ENCODE measurements at regions of chr10 and their contacts with region 1.

Region 1: GRCh38 chr10:7857262-7857661 is 39.0 kb downstream of the TAF3 start:
- DNase-seq: peak in 1 of 2 experiments; percentile 24
- H3K4me3 ChIP-seq: no peak overlapping the region
- H3K4me3 Mint-ChIP-seq: peak overlapping the region; percentile 60
- H3K27ac Mint-ChIP-seq: peak overlapping the region; percentile 81
- H3K4me1 ChIP-seq: peaks cover 62% of the 10 kb centered on the region
- H3K4me1 Mint-ChIP-seq: peaks cover 49% of the 10 kb centered on the region
- H3K27me3 ChIP-seq: no peaks in the 10 kb centered on the region
- H3K27me3 Mint-ChIP-seq: no peaks in the 10 kb centered on the region
- CTCF ChIP-seq: no peak

Region 2: DNA sequence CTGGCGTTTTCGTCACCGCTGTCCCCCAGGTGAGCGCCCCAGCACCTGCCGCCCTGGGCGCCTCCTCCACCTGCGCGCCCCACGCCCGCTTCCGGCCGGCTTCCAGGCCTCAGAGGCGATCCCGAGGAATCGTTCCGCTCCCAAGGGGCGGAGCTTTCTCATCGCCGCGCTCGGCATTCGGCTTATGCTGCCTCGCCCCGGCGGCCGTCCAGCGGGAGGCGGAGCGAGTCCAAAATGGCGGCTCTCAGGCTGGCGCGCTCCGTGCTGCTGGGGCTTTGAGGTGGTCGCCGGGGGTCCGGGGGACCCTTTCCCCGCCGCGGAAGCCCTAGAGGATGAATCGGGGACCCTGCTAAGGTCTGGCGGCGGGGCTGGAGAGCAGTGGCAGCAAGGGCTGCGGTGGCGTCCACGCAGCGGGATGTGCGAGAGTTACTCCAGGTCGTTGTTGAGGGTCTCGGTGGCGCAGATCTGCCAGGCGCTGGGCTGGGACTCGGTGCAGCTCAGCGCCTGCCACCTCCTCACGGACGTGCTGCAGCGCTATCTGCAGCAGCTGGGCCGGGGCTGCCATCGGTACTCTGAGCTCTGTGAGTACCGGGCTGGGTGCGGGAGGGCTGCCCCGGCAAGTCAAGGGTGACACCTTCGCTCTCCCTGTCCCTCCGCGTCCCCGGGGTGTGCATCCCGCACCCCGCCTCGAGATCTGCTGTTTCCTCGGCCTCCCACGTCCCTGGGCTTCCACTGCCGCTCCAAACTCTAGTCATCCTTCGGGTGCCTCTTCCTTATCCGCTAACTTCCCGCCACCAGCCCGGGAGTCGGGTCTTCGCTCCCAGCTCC is 38.8 kb before region 1 on chr10 and contains the start of gene TAF3:
- CTCF ChIA-PET with region 1: interaction called, 6 read pairs
- POLR2A ChIA-PET with region 1: interaction called, 9 read pairs
- intact Hi-C with region 1: loop called (anchors 1 kb)
- DNase-seq: peak; percentile 94 to 99
- H3K4me3 ChIP-seq: peak within 1 kb of the TSS; percentile 95
- H3K4me3 Mint-ChIP-seq: peak within 1 kb of the TSS; percentile 84
- H3K27ac Mint-ChIP-seq: peak within 1 kb of the TSS; percentile 72
- H3K4me1 ChIP-seq: peaks cover 4% of the 10 kb centered on the region; the same call in 1 of the 2 replicates
- H3K4me1 Mint-ChIP-seq: peaks cover 8% of the 10 kb centered on the region
- H3K27me3 ChIP-seq: no peaks in the 10 kb centered on the region
- H3K27me3 Mint-ChIP-seq: no peaks in the 10 kb centered on the region
- CTCF ChIP-seq: no peak
- total RNA-seq, gene TAF3: 28.9 and 30.6 TPM in 2 replicates

Region 3: DNA sequence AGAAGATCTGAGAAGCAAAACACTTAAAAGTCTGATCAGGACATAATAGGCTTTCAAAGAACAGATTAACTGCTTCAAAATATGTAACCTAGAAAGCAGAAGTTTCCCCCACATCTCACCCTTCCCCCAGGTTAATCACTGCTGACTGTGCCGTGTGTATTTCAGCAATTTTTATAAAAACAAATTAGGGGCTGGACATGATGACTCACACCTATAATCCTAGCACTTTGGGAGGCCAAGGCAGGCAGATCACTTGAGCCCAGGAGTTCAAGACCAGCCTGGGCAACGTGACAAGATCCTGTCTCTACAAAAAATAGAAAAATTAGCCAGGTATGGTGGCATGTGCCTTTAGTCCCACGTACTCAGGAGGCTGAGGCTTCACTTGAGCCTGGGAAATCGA is 129.6 kb after region 1 on chr10:
- CTCF ChIA-PET with region 1: no interaction called
- POLR2A ChIA-PET with region 1: no interaction called
- intact Hi-C with region 1: no loop called
- DNase-seq: no peak
- H3K4me3 ChIP-seq: no peak overlapping the region
- H3K4me3 Mint-ChIP-seq: no peak overlapping the region
- H3K27ac Mint-ChIP-seq: no peak overlapping the region
- H3K4me1 ChIP-seq: no peaks in the 10 kb centered on the region
- H3K4me1 Mint-ChIP-seq: no peaks in the 10 kb centered on the region
- H3K27me3 ChIP-seq: no peaks in the 10 kb centered on the region
- H3K27me3 Mint-ChIP-seq: no peaks in the 10 kb centered on the region
- CTCF ChIP-seq: no peak

Region 4: DNA sequence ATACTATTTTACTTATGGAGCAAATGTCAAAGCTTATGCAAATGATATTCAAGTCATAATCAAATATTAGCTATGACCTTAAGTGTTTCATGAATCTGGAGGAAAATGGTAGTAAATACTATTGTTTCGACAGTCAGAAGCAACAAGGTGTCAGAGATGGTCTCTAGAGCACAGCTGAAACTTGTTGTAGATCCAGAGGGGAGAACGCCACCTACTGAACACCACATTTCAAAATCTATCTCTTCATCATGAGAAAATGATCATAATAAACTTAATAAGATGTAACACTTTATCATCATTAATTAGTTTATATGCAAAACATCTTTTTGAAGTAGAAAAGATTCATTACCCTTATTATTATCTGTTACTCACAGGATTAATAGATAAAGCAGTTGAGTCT is 615.9 kb after region 1 on chr10:
- CTCF ChIA-PET with region 1: no interaction called
- POLR2A ChIA-PET with region 1: no interaction called
- intact Hi-C with region 1: loop called (anchors 5 kb)
- DNase-seq: peak in 1 of 2 experiments; percentile 30
- H3K4me3 ChIP-seq: no peak overlapping the region
- H3K4me3 Mint-ChIP-seq: no peak overlapping the region
- H3K27ac Mint-ChIP-seq: no peak overlapping the region
- H3K4me1 ChIP-seq: no peaks in the 10 kb centered on the region
- H3K4me1 Mint-ChIP-seq: no peaks in the 10 kb centered on the region
- H3K27me3 ChIP-seq: no peaks in the 10 kb centered on the region
- H3K27me3 Mint-ChIP-seq: no peaks in the 10 kb centered on the region
- CTCF ChIP-seq: peak in 1 of 2 experiments; percentile 53